Uterus (tissue), 4 donors: ENCODE measurements at regions of chr10 and their contacts with region 1.

Region 1: DNA sequence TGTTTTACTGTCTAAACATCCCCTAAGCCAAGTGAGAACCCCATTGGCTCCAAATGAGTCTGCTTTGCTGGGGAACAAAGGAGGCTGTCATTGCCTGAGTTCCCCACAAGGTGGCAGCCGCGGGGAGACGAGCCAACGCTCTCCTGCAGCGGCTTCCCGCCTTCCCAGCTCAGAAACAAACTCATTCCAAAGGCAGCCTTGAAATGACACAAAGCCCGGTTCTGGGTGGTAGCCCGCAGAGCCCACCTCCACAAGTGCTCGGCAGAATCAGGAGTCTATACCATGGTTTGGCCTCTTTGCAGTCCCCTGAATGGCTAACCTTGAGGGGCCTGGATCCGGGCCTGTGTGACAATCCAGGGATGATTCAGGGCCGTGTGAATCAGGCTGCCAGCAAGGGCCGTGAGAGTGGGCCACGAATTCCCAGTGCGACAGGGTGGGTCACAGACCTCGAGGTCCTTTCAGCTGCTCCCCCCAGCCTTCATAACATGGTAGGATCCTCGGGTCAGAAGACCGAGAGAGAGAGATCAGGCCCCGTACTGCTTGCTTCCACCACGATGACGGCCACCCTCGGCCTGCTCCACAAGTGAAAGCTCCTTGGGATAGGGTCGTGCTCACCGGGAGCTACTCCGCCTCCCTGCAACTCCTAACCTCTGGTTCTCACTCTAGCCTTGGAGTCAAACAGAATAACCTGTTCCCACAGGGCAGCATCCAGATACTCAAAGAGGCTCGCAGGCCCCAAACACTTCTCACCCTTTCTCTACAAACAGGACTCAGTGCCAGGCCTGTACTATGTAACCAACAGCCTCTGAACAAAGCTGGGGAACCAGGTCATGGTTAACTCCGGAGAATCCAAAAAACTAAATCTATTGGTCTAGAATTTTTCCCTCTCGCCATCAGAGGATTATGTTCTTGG is 79.6 kb downstream of the DLG5 start:
- DNase-seq: peak; percentile 79 to 86
- H3K4me3 ChIP-seq: no peak overlapping the region
- H3K27ac ChIP-seq: peak overlapping the region; percentile 72 to 81
- H3K4me1 ChIP-seq: no peaks in the 10 kb centered on the region
- H3K27me3 ChIP-seq: no peaks in the 10 kb centered on the region
- CTCF ChIP-seq: peak; percentile 91 to 97 (median 96)
- POLR2A ChIP-seq: no peak

Region 2: DNA sequence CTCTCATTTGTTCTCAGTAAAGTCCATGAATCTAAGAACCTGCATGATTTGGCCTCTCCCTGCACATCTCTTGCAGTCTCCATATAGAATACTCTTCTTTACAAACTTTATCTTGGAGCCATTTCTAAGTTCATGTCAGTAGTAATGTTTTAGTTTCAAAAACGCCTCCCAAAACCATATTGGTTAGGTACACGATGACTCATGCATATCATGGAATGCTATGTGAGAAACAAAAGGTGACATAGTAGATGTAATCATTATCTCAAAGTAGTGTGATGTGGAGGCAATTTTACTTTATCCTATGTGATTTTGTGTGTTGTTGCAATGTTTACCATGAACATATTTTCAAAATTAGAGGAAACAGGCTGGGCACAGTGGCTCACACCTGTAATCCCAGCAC is 730.1 kb before region 1 on chr10:
- intact Hi-C with region 1: no loop called
- DNase-seq: no peak
- H3K4me3 ChIP-seq: no peak overlapping the region
- H3K27ac ChIP-seq: no peak overlapping the region
- H3K4me1 ChIP-seq: peaks cover 0 to 6% of the 10 kb centered on the region in 2 donors
- H3K27me3 ChIP-seq: no peaks in the 10 kb centered on the region
- CTCF ChIP-seq: no peak
- POLR2A ChIP-seq: no peak

Region 3: DNA sequence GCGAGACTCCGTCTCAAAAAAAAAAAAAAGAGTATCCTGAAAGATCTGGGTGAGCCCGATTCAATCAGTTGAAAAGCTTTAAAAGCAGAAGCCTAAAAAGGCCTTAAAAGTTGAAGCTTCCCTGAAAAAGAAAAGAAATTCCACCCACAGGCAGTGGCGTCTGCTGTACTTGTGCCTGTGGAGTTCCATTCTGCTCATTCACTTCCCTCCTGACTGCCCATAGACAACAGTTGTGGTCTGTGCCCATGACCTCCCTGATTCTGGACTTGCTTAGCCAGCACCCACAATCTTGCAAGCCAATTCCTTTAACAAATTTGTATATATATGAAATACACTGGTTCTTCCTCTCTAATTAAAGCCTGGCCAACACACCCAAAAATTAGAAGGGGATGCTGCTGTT is 62.1 kb before region 1 on chr10:
- intact Hi-C with region 1: no loop called
- DNase-seq: no peak
- H3K4me3 ChIP-seq: no peak overlapping the region
- H3K27ac ChIP-seq: no peak overlapping the region
- H3K4me1 ChIP-seq: no peaks in the 10 kb centered on the region
- H3K27me3 ChIP-seq: no peaks in the 10 kb centered on the region
- CTCF ChIP-seq: no peak
- POLR2A ChIP-seq: no peak

Region 4: GRCh38 chr10:77926566-77927401 is 79.8 kb after region 1 on chr10 and contains the start of gene DLG5:
- intact Hi-C with region 1: loop called (anchors 10 kb)
- DNase-seq: peak; percentile 75 to 79
- H3K4me3 ChIP-seq: peak within 1 kb of the TSS; percentile 55 to 85
- H3K27ac ChIP-seq: peak within 1 kb of the TSS; percentile 85 to 90
- H3K4me1 ChIP-seq: peaks cover 0 to 8% of the 10 kb centered on the region in 2 donors
- H3K27me3 ChIP-seq: no peaks in the 10 kb centered on the region
- CTCF ChIP-seq: peak in 1 of 4 experiments; percentile 52
- POLR2A ChIP-seq: peak; percentile 7 to 63
- total RNA-seq, gene DLG5: 27.1 to 72.6 (median 46.5) TPM

Region 5: GRCh38 chr10:78029269-78030226 is 182.6 kb after region 1 on chr10 and contains the start of gene POLR3A:
- intact Hi-C with region 1: loop called (anchors 5 kb)
- DNase-seq: peak; percentile 95 to 97
- H3K4me3 ChIP-seq: peak within 1 kb of the TSS; percentile 79 to 95
- H3K27ac ChIP-seq: peak within 1 kb of the TSS; percentile 74 to 88
- H3K4me1 ChIP-seq: peaks cover 2 to 7% of the 10 kb centered on the region in 2 donors
- H3K27me3 ChIP-seq: no peaks in the 10 kb centered on the region
- CTCF ChIP-seq: peak; percentile 58 to 85 (median 77)
- POLR2A ChIP-seq: peak in 1 of 2 donors; percentile 32
- total RNA-seq, gene POLR3A: 10.0 to 19.4 (median 14.6) TPM